ENCODE measurements at regions of chr19 and their contacts with region 1.

Region 1: GRCh38 chr19:35822579-35822978 is 9.9 kb upstream of the PRODH2 start:
- DNase-seq: no peak
- H3K4me3 ChIP-seq: no peak overlapping the region
- H3K27me3 ChIP-seq: no peaks in the 10 kb centered on the region; the same call in 1 of the 2 replicates
- CTCF ChIP-seq: no peak

Region 2: DNA sequence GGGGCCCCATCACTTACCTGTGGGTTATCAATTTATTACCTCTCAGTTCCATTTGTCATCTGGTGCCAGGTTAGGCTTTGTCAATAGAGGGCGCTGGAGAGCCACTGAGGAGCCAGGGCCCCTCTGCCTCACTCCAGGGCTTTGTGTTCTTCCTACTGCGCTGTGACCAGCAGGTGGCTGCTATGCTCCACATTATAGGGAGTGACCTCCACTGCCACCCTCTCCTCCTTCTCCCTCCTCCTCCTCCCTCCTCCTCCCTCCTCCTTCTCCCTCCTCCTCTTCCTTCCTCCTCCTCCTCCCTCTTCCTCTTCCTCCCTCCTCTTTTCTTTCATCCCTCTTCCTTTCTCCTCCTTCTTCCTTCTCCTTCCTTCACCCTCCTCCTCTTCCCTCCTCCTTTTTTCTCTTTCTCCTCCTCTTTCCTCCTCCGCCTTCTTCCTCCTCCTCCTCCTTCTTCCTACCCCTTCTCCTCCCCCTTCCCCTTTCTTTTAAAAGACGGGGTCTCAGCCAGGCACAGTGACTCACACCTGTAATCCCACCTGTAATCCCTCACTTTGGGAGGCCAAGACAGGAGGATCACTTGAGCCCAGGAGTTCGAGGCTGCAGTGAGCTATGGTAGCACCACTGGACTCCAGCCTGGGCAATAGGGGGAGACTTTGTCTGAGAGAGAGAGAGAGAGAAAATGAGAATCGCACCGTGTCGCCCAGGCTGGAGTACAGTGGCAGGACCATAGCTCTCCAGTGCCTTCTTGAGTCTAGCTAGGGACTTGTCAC is 128.6 kb before region 1 on chr19:
- CTCF ChIA-PET with region 1: interaction called, 16 read pairs
- POLR2A ChIA-PET with region 1: no interaction called
- DNase-seq: no peak
- H3K4me3 ChIP-seq: no peak overlapping the region
- H3K27me3 ChIP-seq: peaks cover 2% of the 10 kb centered on the region
- CTCF ChIP-seq: peak; percentile 99

Region 3: DNA sequence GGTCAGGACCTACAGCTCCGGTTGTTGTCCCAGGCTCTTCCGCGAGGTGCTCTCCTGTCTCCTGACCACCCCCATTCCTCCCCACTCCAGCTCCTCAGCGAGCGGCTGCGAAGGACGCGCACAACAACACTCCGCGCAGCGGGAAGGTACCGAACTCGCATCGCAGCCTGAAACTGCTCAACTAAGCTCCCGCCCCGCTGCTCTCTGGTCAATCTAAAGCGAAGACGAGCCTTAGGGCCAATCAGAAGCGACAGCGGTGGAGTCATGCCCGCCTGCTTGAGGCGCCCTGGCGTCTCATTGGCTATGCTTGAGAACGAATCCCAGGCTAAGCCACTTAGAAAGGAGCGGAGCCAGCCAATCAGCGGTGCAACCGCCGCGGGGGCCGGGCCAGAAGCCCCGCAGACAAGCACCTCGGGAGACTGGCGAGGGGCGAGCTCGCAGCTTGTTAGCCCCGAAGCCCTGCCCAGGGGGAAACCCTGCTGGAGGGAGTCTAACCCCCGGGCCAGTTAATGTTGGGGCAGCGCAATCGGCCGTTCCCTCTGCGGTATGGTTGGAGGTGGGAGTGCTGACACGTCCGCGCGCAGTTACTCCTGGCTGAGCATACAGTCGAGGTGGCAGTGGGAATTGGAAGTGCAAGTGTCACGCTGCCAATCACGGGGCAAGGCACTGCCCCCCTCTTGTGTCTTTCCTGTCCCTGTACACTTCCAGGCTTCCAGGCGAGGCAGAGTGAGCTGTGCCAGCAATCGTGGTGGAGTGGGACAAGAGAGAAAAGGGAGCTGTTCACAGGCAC is 120.2 kb before region 1 on chr19:
- CTCF ChIA-PET with region 1: interaction called, 11 read pairs
- POLR2A ChIA-PET with region 1: no interaction called
- DNase-seq: peak; percentile 83
- H3K4me3 ChIP-seq: peak overlapping the region; percentile 58
- H3K27me3 ChIP-seq: no peaks in the 10 kb centered on the region
- CTCF ChIP-seq: no peak

Region 4: GRCh38 chr19:36032251-36033104 is 209.9 kb after region 1 on chr19 and contains the start of gene CLIP3:
- CTCF ChIA-PET with region 1: no interaction called
- POLR2A ChIA-PET with region 1: no interaction called
- DNase-seq: no peak
- H3K4me3 ChIP-seq: peak within 1 kb of the TSS; percentile 99
- H3K27me3 ChIP-seq: no peaks in the 10 kb centered on the region
- CTCF ChIP-seq: 0 out of 2 replicates have a peak, but pooled peaks have one; percentile 10
- polyA plus RNA-seq, gene CLIP3: 14.7 and 23.9 TPM in 2 replicates